ENCODE measurements at regions of chr3 and their contacts with region 1.

Region 1: DNA sequence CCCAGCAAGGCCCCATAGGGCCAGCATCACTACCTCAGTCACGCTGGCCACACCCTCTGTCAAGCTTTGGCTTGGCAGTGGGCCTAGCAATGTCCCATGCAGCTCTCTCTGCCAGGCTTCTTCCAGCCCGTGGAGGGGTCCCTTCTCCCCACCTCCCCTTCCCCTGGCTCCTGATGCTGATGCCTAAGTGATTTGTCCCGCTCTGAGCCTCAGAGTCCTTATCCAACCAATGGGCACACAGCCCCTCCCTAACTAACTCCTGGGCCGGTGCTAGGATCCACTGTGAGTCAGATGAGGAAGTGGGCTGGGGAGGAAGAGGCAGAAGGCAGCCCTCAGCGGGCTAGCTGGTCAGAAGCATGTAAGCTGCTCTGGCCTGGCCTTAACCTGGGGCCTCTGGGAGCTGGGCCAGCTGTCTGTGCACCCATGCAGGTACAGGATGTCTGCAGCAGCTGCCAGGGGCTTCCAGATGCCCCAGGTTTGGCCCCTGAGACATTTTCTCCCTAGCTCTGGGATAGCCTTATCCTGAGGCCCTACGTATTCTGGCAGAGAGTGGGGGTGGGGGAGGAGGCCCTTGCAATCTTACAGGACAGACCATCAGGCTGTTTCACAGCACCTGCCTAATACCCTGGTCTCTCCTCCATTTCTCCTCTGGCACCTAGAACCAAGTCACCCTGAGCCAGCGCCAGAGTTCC is 740 bp upstream of the ZBTB47 start:
- DNase-seq: peak in 1 of 2 donors; percentile 59
- ATAC-seq: no peak
- H3K4me3 ChIP-seq: peak overlapping the region; percentile 67 to 73 (median 70)
- H3K27ac ChIP-seq: peak overlapping the region; percentile 87 to 100 (median 92)
- H3K4me1 ChIP-seq: peaks cover 40 to 42% of the 10 kb centered on the region in 2 donors
- H3K27me3 ChIP-seq: no peaks in the 10 kb centered on the region
- CTCF ChIP-seq: no peak
- POLR2A ChIP-seq: peak; percentile 76 to 80

Region 2: DNA sequence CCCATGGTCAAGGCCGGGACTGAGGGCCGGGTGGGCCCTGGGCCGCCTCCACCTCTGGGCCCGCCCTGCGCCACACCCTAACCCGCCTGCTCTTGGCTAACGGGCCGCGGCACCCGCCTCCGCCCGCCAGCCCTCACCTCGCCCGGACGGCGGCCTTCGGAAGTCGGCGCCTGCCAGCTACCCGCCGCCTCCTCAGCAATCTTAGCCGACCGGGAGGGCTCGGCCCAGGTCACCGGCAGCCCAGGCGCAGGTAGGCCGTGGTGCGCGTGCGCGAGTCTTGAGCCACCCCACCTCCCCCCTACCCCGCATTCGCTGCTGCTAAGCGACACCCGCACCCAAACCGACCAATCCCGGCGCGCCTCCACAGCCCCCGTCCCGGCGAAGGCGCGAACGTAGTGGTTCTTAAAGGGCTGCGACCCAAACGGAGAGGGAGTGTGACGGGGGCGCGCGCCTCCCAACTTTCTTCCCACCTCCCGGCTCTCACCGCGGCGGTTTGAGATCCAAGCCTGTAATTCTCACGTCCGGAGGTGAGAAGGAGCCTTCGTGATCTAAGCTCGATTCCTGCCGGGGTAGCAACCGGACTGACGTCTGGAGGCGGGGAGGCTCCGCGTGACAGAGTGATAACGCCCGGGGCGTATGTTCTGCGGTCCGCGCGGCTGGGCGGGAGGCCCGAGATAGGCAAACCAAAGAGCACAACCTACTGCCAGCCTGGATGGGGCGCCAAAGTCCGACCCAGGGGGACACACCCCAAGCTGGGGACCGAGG is 70.9 kb before region 1 on chr3 and contains the start of gene SEC22C:
- in situ Hi-C with region 1: no loop called
- intact Hi-C with region 1: loop called (anchors 2 kb)
- DNase-seq: peak; percentile 96 to 97
- ATAC-seq: peak; percentile 96 to 98
- H3K4me3 ChIP-seq: peak within 1 kb of the TSS; percentile 71 to 82 (median 75)
- H3K27ac ChIP-seq: peak within 1 kb of the TSS; percentile 87 to 94 (median 92)
- H3K4me1 ChIP-seq: peaks cover 11 to 19% of the 10 kb centered on the region in 2 donors
- H3K27me3 ChIP-seq: no peaks in the 10 kb centered on the region
- CTCF ChIP-seq: peak in 3 of 5 experiments; percentile 15 to 43 (median 38)
- POLR2A ChIP-seq: peak; percentile 91 to 98
- total RNA-seq, gene SEC22C: 35.5 to 54.6 (median 40.6) TPM

Region 3: GRCh38 chr3:42591811-42592210 is 60.9 kb before region 1 on chr3:
- in situ Hi-C with region 1: no loop called
- intact Hi-C with region 1: loop called (anchors 2 kb)
- DNase-seq: no peak
- ATAC-seq: no peak
- H3K4me3 ChIP-seq: peak overlapping the region; percentile 68 to 92 (median 76)
- H3K27ac ChIP-seq: peak overlapping the region; percentile 85 to 92 (median 87)
- H3K4me1 ChIP-seq: peaks cover 11 to 16% of the 10 kb centered on the region in 2 donors
- H3K27me3 ChIP-seq: no peaks in the 10 kb centered on the region
- CTCF ChIP-seq: no peak
- POLR2A ChIP-seq: no peak

Region 4: DNA sequence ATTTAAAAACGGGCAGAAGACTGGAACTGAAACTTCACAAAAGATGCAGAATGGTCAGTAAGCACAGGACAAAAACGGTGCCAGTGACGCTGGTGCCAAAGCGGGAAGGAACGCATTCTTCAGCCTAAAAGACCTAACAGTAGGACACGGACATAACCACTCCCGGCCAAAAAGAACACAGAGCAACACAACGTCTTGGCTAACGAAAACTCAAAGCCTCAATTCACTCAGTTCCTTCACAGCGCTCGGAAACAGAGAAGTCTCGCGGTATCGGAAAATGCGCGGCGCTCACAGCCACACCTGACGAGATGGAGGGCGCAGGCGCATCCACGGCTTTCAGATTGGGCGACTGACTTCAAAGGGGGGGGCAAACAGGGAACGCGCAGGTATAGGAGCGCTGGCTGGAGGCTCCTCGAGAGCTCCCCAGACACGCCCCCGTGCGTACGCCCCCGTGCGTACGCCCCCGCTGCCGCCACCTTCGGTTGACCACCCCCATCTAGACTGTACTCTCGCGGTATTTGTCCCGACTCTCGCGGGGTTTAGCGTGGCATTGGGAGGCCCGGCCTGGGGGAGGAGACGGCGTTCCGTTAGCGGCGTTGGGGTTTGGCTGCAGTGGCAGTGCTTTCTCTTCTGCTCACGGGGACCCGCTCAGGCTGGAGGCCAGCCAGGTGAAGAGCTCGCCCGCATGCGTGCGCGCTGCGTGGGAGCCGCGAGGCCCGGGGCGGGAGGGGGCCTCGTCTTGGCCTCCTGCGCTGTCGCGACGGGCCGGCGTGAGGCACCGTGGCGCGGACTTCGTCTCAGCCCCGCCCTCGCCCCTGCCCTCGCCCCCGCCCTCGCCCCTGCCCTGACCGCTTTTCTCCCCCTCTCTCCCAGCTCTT is 52.4 kb before region 1 on chr3 and contains the start of gene NKTR:
- in situ Hi-C with region 1: no loop called
- intact Hi-C with region 1: loop called (anchors 2 kb)
- DNase-seq: peak; percentile 94 to 97
- ATAC-seq: peak; percentile 91 to 92
- H3K4me3 ChIP-seq: peak within 1 kb of the TSS; percentile 86 to 93 (median 90)
- H3K27ac ChIP-seq: peak within 1 kb of the TSS; percentile 96 to 99 (median 98)
- H3K4me1 ChIP-seq: peaks cover 29 to 33% of the 10 kb centered on the region in 2 donors
- H3K27me3 ChIP-seq: no peaks in the 10 kb centered on the region
- CTCF ChIP-seq: no peak
- POLR2A ChIP-seq: peak; percentile 88 to 90
- total RNA-seq, gene NKTR: 10.0 to 56.6 (median 13.6) TPM

Region 5: DNA sequence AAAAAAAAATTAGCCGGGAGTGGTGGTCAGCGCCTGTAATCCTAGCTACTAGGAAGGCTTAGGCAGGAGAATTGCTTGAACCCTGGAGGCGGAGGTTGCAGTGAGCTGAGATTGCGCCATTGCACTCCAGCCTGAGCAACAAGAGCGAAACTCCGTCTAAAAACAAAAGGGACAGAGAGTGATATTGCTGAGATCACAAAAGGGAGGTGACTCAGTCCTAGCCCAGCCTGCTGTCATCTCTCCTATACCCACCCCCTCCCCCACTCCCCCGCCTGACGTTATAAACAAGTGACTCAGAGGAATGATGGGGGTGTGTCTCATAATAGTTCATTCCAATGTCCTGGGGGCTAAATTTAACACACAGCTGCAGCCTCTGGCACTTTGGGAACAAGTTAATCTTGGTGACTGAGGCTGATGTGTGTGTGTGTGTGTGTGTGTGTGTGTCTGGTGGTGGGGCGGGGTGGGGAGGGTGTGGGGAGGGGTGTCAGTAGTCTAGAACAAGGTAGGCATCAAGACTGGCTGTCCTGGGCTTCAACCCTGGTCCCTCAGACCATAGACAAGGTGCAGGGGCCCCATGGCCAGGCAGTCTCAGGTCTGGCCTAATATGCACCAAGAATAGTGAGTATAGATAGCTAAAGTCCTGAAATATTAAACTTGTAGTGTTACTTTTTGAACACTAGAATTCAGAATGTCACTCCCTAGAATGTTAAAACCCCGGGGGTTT is 31.3 kb after region 1 on chr3:
- in situ Hi-C with region 1: no loop called
- intact Hi-C with region 1: loop called (anchors 1 kb)
- DNase-seq: peak; percentile 93 to 97
- ATAC-seq: peak; percentile 74 to 78
- H3K4me3 ChIP-seq: peak overlapping the region in 3 of 4 donors; percentile 12 to 28 (median 26)
- H3K27ac ChIP-seq: peak overlapping the region; percentile 94 to 100 (median 99)
- H3K4me1 ChIP-seq: peaks cover 31 to 49% of the 10 kb centered on the region in 2 donors
- H3K27me3 ChIP-seq: no peaks in the 10 kb centered on the region
- CTCF ChIP-seq: no peak
- POLR2A ChIP-seq: peak; percentile 25 to 32

Region 6: GRCh38 chr3:43071313-43071893 is 418.6 kb after region 1 on chr3:
- in situ Hi-C with region 1: no loop called
- intact Hi-C with region 1: no loop called
- DNase-seq: no peak
- ATAC-seq: peak in 1 of 2 donors; percentile 61
- H3K4me3 ChIP-seq: no peak overlapping the region
- H3K27ac ChIP-seq: no peak overlapping the region
- H3K4me1 ChIP-seq: no peaks in the 10 kb centered on the region
- H3K27me3 ChIP-seq: no peaks in the 10 kb centered on the region
- CTCF ChIP-seq: peak; percentile 36 to 63 (median 44)
- POLR2A ChIP-seq: no peak

Measured in gastrocnemius medialis (tissue), 4 donors.